ENCODE measurements at regions of chr1 and their contacts with region 1.

Region 1: GRCh38 chr1:174800216-174800851 is 199.4 kb upstream of the CACYBP start:
- DNase-seq: peak; percentile 24
- H3K4me3 ChIP-seq: peak overlapping the region; percentile 74
- H3K27ac ChIP-seq: peak overlapping the region; percentile 76
- H3K4me1 ChIP-seq: peaks cover 38% of the 10 kb centered on the region
- CTCF ChIP-seq: no peak

Region 2: GRCh38 chr1:174469687-174470086 is 330.6 kb before region 1 on chr1:
- CTCF ChIA-PET with region 1: no interaction called
- POLR2A ChIA-PET with region 1: no interaction called
- intact Hi-C with region 1: no loop called
- DNase-seq: no peak
- H3K4me3 ChIP-seq: no peak overlapping the region
- H3K27ac ChIP-seq: no peak overlapping the region
- H3K4me1 ChIP-seq: no peaks in the 10 kb centered on the region
- CTCF ChIP-seq: no peak

Region 3: DNA sequence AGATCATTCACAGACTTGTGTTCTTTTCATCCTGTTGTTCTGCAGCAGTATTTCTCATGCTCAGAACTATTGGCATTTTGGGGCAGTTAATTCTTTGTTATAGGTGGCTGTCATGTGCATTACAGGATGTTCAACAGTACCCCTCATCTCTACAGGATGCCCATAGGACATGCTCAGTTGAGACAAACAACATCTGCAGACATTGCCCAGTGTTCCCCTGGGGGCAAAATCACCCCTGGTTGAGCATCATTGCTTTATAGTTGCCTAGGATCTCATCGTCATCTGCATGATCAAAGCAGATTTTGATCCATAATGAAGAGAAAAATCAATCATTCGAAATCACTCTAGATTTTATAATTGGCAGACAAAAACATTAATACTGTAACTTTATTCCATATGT is 23.1 kb before region 1 on chr1:
- CTCF ChIA-PET with region 1: no interaction called
- POLR2A ChIA-PET with region 1: interaction called, 4 read pairs
- intact Hi-C with region 1: loop called (anchors 1 kb)
- DNase-seq: peak; percentile 95
- H3K4me3 ChIP-seq: no peak overlapping the region
- H3K27ac ChIP-seq: peak overlapping the region; percentile 93
- H3K4me1 ChIP-seq: peaks cover 61% of the 10 kb centered on the region
- CTCF ChIP-seq: no peak

Region 4: GRCh38 chr1:174892016-174892415 is 91.7 kb after region 1 on chr1:
- CTCF ChIA-PET with region 1: no interaction called
- POLR2A ChIA-PET with region 1: no interaction called
- intact Hi-C with region 1: no loop called
- DNase-seq: no peak
- H3K4me3 ChIP-seq: no peak overlapping the region
- H3K27ac ChIP-seq: no peak overlapping the region
- H3K4me1 ChIP-seq: peaks cover 8% of the 10 kb centered on the region
- CTCF ChIP-seq: no peak

Region 5: DNA sequence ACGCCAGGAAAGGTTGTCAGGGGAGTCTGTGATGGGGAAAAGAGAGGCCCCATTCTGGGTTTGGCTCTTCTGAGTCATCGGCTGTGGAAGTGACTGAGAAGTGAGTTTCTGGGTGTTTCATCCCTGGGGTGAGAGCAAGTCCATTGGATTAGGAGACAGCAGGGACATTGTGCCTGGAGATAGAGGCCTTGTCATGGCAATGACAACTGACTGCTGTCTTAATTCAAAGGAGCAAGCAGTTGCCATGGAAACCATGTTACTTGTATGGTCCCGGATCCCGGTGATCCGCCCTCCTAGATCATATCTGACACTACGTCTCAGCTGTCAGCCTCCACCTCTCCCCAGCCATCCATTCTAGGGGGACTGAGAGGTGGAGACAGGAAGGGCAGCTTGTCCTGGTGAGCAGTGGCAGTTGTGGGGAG is 357.8 kb after region 1 on chr1:
- CTCF ChIA-PET with region 1: no interaction called
- POLR2A ChIA-PET with region 1: no interaction called
- intact Hi-C with region 1: no loop called
- DNase-seq: no peak
- H3K4me3 ChIP-seq: no peak overlapping the region
- H3K27ac ChIP-seq: no peak overlapping the region
- H3K4me1 ChIP-seq: peaks cover 29% of the 10 kb centered on the region
- CTCF ChIP-seq: no peak

Region 6: DNA sequence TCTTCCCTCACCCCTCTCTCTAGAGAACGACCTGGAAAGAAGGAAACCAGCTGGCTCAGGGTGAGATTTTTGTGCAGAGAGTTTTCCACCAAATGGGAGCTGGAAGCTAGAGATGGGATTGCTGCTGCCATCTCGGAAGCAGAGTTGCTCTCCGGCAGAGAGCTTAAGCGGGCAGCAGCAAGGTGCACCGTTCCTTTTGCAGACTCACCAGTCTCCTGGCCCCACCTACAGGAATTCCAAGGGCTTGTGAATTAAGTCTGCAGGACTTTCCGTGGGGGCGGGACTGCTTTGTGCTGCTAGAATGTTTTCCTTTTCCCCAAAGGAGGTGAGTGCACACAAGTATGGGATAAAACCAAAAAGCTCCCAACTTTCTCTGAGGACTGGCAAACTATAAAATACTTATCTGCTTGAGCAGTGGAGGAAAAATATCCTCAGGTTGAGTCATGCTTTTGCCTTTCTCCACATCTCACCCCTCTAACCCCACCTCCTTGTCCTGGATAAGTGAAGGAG is 421.4 kb after region 1 on chr1:
- CTCF ChIA-PET with region 1: no interaction called
- POLR2A ChIA-PET with region 1: no interaction called
- intact Hi-C with region 1: no loop called
- DNase-seq: no peak
- H3K4me3 ChIP-seq: no peak overlapping the region
- H3K27ac ChIP-seq: no peak overlapping the region
- H3K4me1 ChIP-seq: peaks cover 99% of the 10 kb centered on the region
- CTCF ChIP-seq: no peak

Measured in OCI-LY7 (cell line).